ENCODE measurements at regions of chr17 and their contacts with region 1.

Region 1: DNA sequence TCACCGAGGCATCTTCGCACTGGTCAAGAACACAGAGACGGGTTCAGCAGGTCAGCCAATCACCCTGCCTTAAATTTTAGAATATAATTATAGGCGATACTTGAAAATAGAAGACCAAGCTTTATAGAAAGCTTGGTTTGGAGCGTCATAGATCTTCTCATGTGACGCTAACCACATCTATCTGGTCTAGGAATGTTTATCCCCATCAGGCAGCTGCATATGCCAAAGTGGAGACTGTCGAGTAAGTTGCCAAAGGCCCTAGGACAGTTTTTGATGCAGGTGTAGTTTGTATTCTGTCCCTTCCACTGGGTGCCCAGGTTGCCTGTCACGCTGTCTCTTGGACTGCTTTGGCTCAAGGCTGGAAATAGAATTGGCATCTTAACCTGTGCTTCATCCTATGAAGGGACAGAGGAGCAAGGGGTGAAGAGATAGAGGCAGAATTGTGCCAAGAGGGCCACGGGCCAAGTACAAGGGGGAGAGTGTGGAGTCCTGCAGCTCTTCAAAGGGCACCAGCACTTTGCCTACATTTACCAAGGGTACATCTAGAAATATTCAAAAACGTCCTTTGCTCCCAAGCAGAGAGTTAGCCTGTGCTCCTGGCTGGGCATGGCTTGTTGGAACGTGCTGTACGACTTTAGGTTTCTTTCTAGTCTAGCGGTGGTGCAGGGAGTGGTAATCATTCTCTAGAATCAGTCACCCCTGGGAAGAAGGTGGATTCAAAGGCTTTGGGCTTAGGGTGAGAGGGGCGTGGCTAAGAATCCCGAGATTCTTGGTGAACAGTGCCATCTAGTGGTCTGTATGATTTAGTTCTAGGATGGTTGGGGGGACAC is 5.3 kb upstream of the WIPI1 start:
- DNase-seq: peak; percentile 70
- ATAC-seq: peak; percentile 89

Region 2: GRCh38 chr17:68172461-68172954 is 290.1 kb before region 1 on chr17:
- intact Hi-C with region 1: loop called (anchors 10 kb)
- DNase-seq: peak; percentile 86
- ATAC-seq: peak; percentile 77

Region 3: DNA sequence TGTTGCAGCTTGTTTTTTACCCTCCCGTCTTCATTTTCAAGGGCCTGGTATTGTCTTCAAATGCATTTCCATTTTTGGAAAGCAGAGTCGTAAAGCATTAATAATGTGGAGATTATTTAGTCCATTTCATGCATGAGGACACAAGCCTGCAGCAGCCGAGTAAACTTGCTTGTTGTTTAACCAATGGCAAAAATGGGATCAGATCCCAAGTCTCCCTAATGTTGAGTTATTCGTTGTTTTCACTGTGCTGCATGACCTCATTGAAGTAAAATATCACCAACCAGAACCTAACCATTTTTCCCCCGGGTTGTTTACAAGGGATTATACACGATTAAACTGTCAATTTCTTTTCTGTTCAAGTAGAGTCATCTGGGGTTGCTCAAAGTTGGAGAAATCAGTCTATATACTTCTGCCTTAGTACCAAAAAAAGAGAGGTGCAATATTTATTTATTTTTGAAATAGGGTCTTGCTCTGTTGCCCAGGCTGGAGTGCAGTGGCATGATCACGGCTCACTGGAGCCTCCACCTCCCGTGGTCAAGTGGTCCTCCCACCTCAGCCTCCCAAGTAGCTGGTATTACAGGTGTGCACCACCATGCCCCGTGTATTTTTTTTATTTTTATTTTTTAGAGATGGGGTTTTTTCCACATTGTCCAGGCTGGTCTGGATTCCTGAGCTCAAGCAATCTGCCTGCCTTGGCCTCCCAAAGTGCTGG is 202.4 kb before region 1 on chr17:
- intact Hi-C with region 1: loop called (anchors 10 kb)
- DNase-seq: no peak
- ATAC-seq: no peak

Measured in sciatic nerve (tissue), 2 donors.